A673 (cell line): ENCODE measurements at regions of chr13 and their contacts with region 1.

Region 1: GRCh38 chr13:70391678-70392077 is 283.4 kb upstream of the KLHL1 start:
- DNase-seq: no peak
- H3K4me3 ChIP-seq: no peak overlapping the region
- H3K27ac ChIP-seq: no peak overlapping the region
- H3K4me1 ChIP-seq: no peaks in the 10 kb centered on the region
- H3K27me3 ChIP-seq: no peaks in the 10 kb centered on the region
- CTCF ChIP-seq: no peak

Region 2: DNA sequence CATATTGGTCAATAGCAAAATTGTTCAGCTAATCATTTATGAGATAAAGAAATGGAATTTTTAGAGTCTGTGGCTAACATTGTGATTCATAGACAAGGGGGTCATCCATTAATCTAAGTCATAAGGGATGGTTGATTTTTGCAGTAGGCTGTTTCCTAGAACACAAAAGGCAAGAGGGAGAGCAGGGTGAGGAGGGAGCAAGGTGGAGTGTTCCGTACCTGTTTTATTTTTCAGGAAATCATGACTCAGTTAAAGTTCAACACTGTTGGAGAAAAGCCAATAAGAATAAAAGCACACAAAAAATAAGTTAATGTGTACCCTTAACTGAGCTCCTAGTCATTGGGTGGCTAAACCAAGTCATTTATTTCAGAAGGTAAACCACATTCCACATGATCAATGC is 796.5 kb before region 1 on chr13:
- CTCF ChIA-PET with region 1: no interaction called
- POLR2A ChIA-PET with region 1: no interaction called
- intact Hi-C with region 1: no loop called
- DNase-seq: no peak
- H3K4me3 ChIP-seq: no peak overlapping the region
- H3K27ac ChIP-seq: no peak overlapping the region
- H3K4me1 ChIP-seq: no peaks in the 10 kb centered on the region
- H3K27me3 ChIP-seq: no peaks in the 10 kb centered on the region
- CTCF ChIP-seq: no peak

Region 3: GRCh38 chr13:71695662-71696061 is 1304.0 kb after region 1 on chr13:
- CTCF ChIA-PET with region 1: no interaction called
- POLR2A ChIA-PET with region 1: interaction called, 18 read pairs
- intact Hi-C with region 1: no loop called
- DNase-seq: no peak
- H3K4me3 ChIP-seq: no peak overlapping the region
- H3K27ac ChIP-seq: no peak overlapping the region
- H3K4me1 ChIP-seq: no peaks in the 10 kb centered on the region
- H3K27me3 ChIP-seq: no peaks in the 10 kb centered on the region
- CTCF ChIP-seq: no peak